Breast epithelium (tissue), 4 donors: ENCODE measurements at regions of chr12 and their contacts with region 1.

Region 1: DNA sequence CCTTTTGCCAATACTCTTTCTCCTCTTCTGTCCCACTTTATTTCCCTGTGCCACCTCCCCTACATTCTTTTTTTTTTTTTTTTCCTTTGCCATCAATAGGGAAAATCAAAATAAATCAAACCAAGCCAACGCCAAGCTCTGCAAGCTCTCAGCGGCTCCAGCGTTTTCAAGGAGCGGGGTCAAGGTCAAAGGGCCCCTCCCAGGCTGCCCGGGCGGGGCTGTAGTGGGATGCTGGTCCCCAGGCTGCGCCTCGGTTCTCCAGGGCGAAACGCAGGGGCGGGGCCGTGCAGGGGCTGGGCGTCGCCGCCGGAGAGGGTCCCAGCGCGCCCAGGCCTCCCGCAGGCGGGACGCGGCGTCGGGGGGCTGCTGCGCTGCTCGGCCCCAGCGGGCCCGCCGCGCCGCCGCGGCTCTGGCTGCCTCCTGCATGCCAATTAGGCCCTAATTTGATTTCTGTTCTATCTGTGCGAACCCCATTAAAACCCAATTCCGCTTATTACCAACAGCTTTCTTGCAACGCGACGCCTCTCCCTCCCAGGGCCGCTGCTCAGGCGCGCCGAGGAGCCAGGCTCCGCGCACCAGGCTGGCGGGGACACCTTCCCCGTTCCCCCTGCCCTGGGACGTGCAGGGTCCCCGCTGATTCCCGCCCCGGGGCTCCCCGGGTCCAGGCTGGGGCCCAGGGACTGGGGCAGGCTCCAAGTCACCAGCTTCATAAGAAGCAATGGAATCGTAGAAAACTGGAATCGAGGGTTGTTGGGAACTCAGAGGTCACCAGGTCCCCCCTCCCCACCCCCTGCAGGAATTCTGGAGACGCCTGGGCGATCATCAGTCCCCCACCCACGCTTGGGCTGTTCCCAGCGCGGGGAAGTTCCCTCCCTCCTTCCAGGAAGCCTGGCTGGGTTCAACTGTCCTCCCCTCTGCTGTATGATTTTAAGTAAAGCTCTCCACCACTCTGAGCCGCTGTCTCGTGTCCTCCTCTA is 50.7 kb upstream of the MAP1LC3B2 start:
- DNase-seq: no peak
- H3K4me3 ChIP-seq: peak overlapping the region; percentile 45 to 75 (median 46)
- H3K27ac ChIP-seq: peak overlapping the region; percentile 45 to 81
- H3K4me1 ChIP-seq: no peaks in the 10 kb centered on the region
- H3K27me3 ChIP-seq: no peaks in the 10 kb centered on the region
- CTCF ChIP-seq: no peak
- POLR2A ChIP-seq: no peak

Region 2: GRCh38 chr12:115149685-115150378 is 1358.6 kb before region 1 on chr12:
- intact Hi-C with region 1: loop called (anchors 5 kb)
- DNase-seq: no peak
- H3K4me3 ChIP-seq: no peak overlapping the region
- H3K27ac ChIP-seq: no peak overlapping the region
- H3K4me1 ChIP-seq: no peaks in the 10 kb centered on the region
- H3K27me3 ChIP-seq: no peaks in the 10 kb centered on the region
- CTCF ChIP-seq: no peak
- POLR2A ChIP-seq: no peak

Region 3: DNA sequence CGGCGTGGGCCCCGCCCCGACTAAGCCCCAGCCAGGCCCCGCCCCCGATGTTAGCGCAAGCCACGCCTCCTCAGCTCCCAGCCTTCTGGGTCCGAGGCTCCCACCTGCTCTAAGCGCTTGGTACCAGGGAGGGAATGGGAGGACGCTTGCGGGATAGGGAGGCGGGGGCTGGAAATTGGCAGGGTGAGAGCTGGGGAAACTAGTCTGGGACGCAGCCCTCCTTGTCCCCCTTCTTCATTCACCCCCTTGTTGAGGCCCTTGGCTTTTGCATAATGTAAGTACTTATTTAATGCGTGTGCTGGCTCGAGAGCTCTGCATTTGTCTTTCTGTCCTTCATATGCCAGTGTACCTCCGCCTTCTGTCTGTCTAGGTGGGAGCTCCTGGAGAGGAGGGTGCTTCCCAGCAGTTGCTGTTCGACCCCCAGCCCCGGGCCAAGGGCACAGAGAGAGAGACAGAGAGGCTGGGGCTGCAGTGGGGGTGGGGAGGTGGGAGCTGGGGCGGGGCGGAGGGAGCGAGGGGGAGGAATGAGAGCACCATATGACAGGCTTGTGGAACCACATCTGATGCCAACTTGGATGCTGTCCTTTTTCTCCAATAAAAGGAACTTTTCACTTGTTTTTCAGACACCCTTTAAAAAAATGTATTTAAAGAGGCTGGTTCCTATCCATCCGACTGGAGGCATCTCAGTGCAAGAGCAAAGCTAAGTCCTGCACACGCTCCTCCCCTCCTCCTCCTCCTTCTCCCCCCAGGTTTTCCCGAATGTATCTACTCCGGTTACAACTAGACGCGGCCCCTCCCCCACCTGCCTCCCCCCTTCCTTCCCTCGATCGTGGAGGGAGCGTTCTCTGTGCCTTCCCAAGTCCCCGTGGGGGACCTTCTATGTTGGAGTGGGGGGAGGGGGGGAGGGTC is 25.2 kb after region 1 on chr12:
- intact Hi-C with region 1: no loop called
- DNase-seq: peak in 1 of 2 donors; percentile 79
- H3K4me3 ChIP-seq: peak overlapping the region; percentile 51 to 66 (median 63)
- H3K27ac ChIP-seq: peak overlapping the region; percentile 89 to 90
- H3K4me1 ChIP-seq: peaks cover 0 to 9% of the 10 kb centered on the region in 2 donors
- H3K27me3 ChIP-seq: no peaks in the 10 kb centered on the region
- CTCF ChIP-seq: no peak
- POLR2A ChIP-seq: no peak